ENCODE measurements at regions of chr12 and their contacts with region 1.

Region 1: DNA sequence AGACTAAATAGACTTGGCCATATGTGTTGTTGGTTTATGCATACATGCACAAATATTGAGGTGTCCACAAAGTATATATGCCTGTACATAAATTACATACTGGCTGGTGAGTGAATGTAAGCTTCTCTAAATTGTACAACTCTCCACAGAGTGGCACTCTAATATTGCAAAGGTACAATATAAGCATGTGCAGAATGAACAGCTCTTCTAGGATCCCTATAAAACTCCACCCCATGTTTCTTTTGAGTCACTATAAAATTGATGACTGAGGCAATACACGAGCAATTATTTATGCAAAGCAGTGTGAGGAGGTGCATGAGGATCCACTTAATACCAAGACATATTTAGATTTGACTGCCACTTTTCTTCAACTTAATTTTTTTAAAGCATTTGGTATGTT is 172.2 kb downstream of the NAV3 start:
- DNase-seq: no peak
- H3K4me3 ChIP-seq: no peak overlapping the region
- H3K27ac ChIP-seq: no peak overlapping the region
- H3K4me1 ChIP-seq: peaks cover 4% of the 10 kb centered on the region
- H3K27me3 ChIP-seq: no peaks in the 10 kb centered on the region
- CTCF ChIP-seq: no peak

Region 2: GRCh38 chr12:78118036-78118435 is 115.2 kb after region 1 on chr12:
- intact Hi-C with region 1: loop called (anchors 10 kb)
- DNase-seq: no peak
- H3K4me3 ChIP-seq: no peak overlapping the region
- H3K27ac ChIP-seq: no peak overlapping the region
- H3K4me1 ChIP-seq: no peaks in the 10 kb centered on the region
- H3K27me3 ChIP-seq: no peaks in the 10 kb centered on the region
- CTCF ChIP-seq: no peak

Region 3: DNA sequence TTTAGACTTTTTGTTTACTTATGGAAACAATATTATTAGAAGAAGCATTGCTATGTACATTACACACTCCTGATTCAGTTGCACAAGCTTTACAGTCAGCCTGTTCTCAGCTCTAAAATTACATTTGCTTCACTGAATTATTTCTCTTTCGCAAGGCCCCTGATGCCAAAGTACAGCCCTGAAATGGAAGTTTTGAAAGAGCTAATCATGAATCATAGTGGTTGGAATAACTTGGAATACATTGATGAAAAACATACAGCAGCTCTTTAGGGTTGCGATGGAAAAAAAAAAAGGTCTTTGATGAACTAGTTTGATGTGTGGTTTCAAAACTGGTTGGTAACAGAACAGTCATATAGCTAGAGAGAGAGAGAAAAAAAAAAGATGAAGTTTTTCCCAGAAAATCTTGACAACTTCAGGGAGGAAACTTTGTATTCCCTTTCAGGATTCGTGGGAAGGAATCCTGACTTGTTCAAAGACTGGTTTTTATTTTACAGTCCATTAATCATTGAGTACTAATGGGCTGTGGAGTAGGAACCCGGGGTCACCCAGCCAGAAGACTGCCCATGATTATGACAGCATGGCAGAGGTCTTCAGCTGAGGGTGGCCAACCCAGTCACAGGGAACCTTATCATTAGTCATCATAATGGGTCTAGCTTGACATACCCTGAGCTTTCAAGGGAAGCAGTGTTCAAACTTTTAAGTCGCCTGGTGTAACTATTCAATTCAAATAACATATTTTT is 287.9 kb after region 1 on chr12:
- intact Hi-C with region 1: no loop called
- DNase-seq: no peak
- H3K4me3 ChIP-seq: no peak overlapping the region
- H3K27ac ChIP-seq: no peak overlapping the region
- H3K4me1 ChIP-seq: no peaks in the 10 kb centered on the region
- H3K27me3 ChIP-seq: no peaks in the 10 kb centered on the region
- CTCF ChIP-seq: no peak

Measured in colonic mucosa (tissue), 4 donors.